Natural killer cell (primary cell): ENCODE measurements at regions of chr1 and their contacts with region 1.

Region 1: DNA sequence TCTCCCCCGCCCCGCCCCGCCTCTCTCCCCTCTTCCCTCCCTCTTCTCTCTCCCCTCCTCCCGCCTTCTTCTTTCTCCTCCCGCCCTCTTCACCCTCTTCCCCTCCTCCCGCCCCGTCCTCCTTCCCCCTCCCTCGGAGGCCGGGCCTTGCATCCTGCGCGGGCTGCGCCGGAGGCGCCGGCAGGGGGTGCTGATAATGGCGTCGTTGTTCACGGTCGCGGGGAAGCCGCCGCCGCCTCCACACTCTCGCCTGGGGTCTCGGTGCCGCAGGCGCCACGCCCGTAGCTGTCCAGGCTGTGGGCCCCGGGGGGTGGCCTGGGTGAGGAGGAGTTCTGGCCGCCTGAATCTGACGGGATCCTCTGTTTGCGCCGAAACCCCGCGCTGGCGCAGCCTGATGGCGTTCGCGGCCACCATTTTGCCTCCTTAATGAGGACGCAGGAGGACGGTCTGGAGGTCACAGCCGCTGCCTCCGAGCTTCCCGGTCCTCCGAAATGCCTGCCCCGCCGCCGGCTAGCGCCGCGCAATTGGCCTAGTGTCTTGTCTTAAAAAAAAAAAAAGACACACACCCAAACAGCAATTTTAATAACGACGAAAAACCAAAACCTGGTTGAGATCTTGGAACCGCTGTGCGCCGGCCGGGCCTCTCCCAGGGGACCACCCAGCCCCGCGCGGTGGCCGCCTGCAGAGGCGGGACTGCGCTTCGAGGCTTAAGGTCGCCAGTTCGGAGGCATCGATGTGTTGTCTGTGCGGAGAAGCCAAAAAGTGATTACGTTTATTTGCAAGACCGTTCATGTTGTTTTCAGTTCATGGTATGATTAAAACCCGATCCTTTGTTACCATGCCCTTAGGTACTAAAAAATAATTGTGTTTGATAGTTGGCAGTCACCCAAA is 106.6 kb upstream of the HNRNPU start:
- DNase-seq: peak; percentile 88 to 96
- ATAC-seq: peak; percentile 79 to 92 (median 79)
- H3K4me3 ChIP-seq: peak overlapping the region; percentile 85
- H3K4me3 Mint-ChIP-seq: peak overlapping the region; percentile 95
- H3K27ac ChIP-seq: peak overlapping the region; percentile 100
- H3K27ac Mint-ChIP-seq: peak overlapping the region; percentile 98 to 99
- H3K4me1 ChIP-seq: peaks cover 5% of the 10 kb centered on the region
- H3K4me1 Mint-ChIP-seq: peaks cover 13 to 14% of the 10 kb centered on the region in 2 donors
- H3K27me3 ChIP-seq: no peaks in the 10 kb centered on the region
- H3K27me3 Mint-ChIP-seq: no peaks in the 10 kb centered on the region
- CTCF ChIP-seq: peak; percentile 19

Region 2: DNA sequence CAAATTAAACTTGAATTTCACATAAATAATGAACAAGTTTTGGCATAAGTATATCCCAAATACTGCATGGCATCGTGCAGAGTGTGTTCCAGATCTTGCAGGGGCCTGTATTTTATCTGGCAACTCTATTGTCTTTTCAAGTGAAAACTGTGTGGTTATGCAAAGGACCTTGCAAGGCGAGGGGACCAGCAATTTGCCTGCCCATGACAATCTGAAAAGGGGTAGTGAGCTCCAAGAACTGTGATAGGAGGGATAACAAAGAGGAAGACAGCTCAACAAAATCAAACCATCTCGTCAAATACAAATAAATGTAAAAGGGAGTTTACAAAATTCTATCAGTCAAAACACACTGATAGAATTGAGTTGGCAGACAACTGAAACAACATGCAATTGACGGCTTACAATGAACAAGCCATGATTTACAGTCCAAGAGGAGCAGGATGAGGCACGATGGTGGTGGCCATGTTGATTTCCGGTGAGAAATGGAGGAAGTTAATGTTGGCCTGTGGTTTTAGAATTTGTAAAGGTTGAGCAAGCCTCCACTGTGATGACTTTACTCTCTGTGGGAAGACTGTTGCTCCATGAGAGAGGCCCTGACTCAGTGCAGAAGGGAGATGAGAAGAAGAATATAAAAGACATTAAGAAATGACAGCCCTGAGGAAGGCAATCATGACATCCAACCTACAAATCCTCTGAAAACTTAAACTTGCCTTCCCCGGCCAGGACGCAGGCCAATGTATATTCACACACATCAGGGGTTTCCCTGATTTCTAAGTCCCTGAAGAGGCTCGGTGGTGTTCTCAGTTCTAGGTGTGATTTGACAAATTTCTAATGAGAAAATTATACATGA is 651.4 kb before region 1 on chr1:
- intact Hi-C with region 1: loop called (anchors 5 kb)
- DNase-seq: peak; percentile 62 to 76
- ATAC-seq: peak; percentile 69 to 88 (median 88)
- H3K4me3 ChIP-seq: no peak overlapping the region
- H3K4me3 Mint-ChIP-seq: peak overlapping the region; percentile 80
- H3K27ac ChIP-seq: peak overlapping the region; percentile 67
- H3K27ac Mint-ChIP-seq: peak overlapping the region; percentile 88 to 92
- H3K4me1 ChIP-seq: peaks cover 90% of the 10 kb centered on the region
- H3K4me1 Mint-ChIP-seq: peaks cover 79 to 83% of the 10 kb centered on the region in 2 donors
- H3K27me3 ChIP-seq: no peaks in the 10 kb centered on the region
- H3K27me3 Mint-ChIP-seq: no peaks in the 10 kb centered on the region
- CTCF ChIP-seq: no peak

Region 3: DNA sequence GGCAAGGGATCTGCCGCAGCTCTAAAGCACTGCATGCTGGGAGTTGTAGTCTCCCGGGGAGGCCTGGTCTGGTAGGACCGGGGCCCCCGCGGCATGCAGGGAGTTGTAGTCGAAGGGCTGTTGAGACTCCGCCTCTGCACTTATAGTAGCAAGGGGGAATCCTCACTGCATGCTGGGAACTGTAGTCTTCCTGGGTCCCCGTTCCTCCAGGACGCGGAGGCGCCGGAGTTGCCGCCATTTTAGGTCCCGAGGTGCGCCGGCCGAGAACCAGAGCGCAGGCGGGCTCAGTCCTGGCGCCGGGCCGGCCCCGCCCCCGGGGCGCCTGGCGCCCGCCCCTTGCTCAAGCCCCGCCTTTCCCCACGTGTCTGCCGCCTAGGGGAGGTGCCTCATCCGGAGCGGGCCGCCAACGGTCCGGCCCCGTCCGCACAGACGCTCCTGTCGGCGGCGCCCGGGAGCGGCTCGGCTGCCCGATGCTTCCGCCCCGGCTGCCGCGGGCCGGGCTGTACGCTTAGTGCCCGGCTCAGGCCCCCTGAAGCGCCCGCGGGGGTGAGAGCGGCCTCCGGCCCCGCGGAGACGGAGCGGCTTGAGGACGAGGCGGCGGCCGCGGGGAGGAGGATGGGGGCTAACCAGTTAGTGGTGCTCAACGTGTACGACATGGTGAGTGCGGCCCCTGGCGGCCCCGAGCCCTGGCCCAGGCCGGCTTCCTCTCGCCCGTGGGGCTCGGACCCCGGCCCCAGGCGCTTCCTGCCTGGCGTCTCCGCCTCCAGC is 318.0 kb before region 1 on chr1 and contains the start of gene DESI2:
- intact Hi-C with region 1: loop called (anchors 1 kb)
- DNase-seq: peak; percentile 96 to 99
- ATAC-seq: peak; percentile 88 to 96 (median 88)
- H3K4me3 ChIP-seq: peak within 1 kb of the TSS; percentile 90
- H3K4me3 Mint-ChIP-seq: peak within 1 kb of the TSS; percentile 77
- H3K27ac ChIP-seq: peak within 1 kb of the TSS; percentile 76
- H3K27ac Mint-ChIP-seq: peak within 1 kb of the TSS in 1 of 2 donors; percentile 75
- H3K4me1 ChIP-seq: peaks cover 14% of the 10 kb centered on the region
- H3K4me1 Mint-ChIP-seq: peaks cover 19 to 22% of the 10 kb centered on the region in 2 donors
- H3K27me3 ChIP-seq: no peaks in the 10 kb centered on the region
- H3K27me3 Mint-ChIP-seq: peaks cover 0 to 4% of the 10 kb centered on the region in 2 donors
- CTCF ChIP-seq: peak; percentile 48
- total RNA-seq, gene DESI2: 24.1 to 30.5 (median 25.4) TPM

Region 4: GRCh38 chr1:244835276-244836134 is 135.4 kb before region 1 on chr1 and contains the start of gene COX20:
- intact Hi-C with region 1: loop called (anchors 1 kb)
- DNase-seq: peak in 1 of 2 donors; percentile 95
- ATAC-seq: peak; percentile 71 to 89 (median 72)
- H3K4me3 ChIP-seq: peak within 1 kb of the TSS; percentile 61
- H3K4me3 Mint-ChIP-seq: peak within 1 kb of the TSS; percentile 98
- H3K27ac ChIP-seq: peak within 1 kb of the TSS; percentile 99
- H3K27ac Mint-ChIP-seq: peak within 1 kb of the TSS; percentile 96 to 99
- H3K4me1 ChIP-seq: peaks cover 11% of the 10 kb centered on the region
- H3K4me1 Mint-ChIP-seq: peaks cover 48 to 54% of the 10 kb centered on the region in 2 donors
- H3K27me3 ChIP-seq: no peaks in the 10 kb centered on the region
- H3K27me3 Mint-ChIP-seq: no peaks in the 10 kb centered on the region
- CTCF ChIP-seq: no peak
- total RNA-seq, gene COX20: 24.3 to 25.4 (median 24.9) TPM

Region 5: GRCh38 chr1:244918421-244919319 is 52.2 kb before region 1 on chr1:
- intact Hi-C with region 1: loop called (anchors 2 kb)
- DNase-seq: peak; percentile 67 to 88
- ATAC-seq: peak; percentile 95 to 98 (median 98)
- H3K4me3 ChIP-seq: peak overlapping the region; percentile 44
- H3K4me3 Mint-ChIP-seq: peak overlapping the region; percentile 96
- H3K27ac ChIP-seq: no peak overlapping the region
- H3K27ac Mint-ChIP-seq: peak overlapping the region; percentile 56 to 93
- H3K4me1 ChIP-seq: peaks cover 9% of the 10 kb centered on the region
- H3K4me1 Mint-ChIP-seq: peaks cover 6 to 15% of the 10 kb centered on the region in 2 donors
- H3K27me3 ChIP-seq: no peaks in the 10 kb centered on the region
- H3K27me3 Mint-ChIP-seq: no peaks in the 10 kb centered on the region
- CTCF ChIP-seq: no peak

Region 6: GRCh38 chr1:244937099-244937498 is 33.8 kb before region 1 on chr1:
- intact Hi-C with region 1: no loop called
- DNase-seq: no peak
- ATAC-seq: no peak
- H3K4me3 ChIP-seq: no peak overlapping the region
- H3K4me3 Mint-ChIP-seq: no peak overlapping the region
- H3K27ac ChIP-seq: no peak overlapping the region
- H3K27ac Mint-ChIP-seq: no peak overlapping the region
- H3K4me1 ChIP-seq: no peaks in the 10 kb centered on the region
- H3K4me1 Mint-ChIP-seq: no peaks in the 10 kb centered on the region
- H3K27me3 ChIP-seq: no peaks in the 10 kb centered on the region
- H3K27me3 Mint-ChIP-seq: peaks cover 0 to 2% of the 10 kb centered on the region in 2 donors
- CTCF ChIP-seq: no peak

Region 7: DNA sequence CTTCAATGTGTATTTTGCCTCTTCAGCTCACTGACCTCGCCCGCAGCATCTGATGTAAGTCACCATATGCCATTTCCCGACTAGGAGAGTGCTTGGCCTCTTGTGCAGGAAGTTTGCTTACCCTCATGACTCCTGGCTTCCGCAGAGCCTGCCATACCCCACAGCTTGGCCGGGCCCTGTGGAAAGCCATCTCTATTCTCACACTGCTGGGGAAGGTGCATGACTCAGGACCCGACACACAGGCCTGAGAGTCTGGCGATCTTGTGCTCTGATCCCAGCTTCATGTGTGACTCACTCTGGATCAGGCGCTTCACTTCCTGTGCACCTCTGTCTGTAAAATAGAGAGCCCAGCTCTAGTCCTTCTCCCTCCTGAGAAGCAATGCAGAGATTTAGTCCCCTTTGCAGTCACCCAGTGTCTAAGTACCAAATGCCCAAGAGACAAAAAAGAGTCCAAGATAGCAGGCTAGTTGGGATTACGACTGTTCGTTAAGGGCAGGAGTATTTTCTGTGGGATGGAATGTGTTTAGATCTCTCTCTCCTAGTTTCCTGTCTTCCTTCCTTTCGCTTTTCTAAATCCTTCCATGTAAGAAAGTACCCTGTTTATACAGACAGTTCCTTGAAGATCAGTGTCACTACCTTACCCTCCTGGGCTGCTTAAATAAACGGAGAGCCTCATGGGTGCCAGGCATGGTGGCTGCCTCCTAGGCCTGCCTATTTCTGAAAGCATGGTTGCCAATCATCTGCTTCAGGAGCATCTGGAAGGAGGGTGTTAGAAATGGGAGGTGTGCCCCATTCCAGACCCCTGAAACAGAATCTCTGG is 121.1 kb after region 1 on chr1:
- intact Hi-C with region 1: no loop called
- DNase-seq: no peak
- ATAC-seq: no peak
- H3K4me3 ChIP-seq: no peak overlapping the region
- H3K4me3 Mint-ChIP-seq: no peak overlapping the region
- H3K27ac ChIP-seq: no peak overlapping the region
- H3K27ac Mint-ChIP-seq: no peak overlapping the region
- H3K4me1 ChIP-seq: no peaks in the 10 kb centered on the region
- H3K4me1 Mint-ChIP-seq: no peaks in the 10 kb centered on the region
- H3K27me3 ChIP-seq: no peaks in the 10 kb centered on the region
- H3K27me3 Mint-ChIP-seq: no peaks in the 10 kb centered on the region
- CTCF ChIP-seq: no peak